Aorta (tissue), 5 donors: ENCODE measurements at regions of chr12 and their contacts with region 1.

Region 1: DNA sequence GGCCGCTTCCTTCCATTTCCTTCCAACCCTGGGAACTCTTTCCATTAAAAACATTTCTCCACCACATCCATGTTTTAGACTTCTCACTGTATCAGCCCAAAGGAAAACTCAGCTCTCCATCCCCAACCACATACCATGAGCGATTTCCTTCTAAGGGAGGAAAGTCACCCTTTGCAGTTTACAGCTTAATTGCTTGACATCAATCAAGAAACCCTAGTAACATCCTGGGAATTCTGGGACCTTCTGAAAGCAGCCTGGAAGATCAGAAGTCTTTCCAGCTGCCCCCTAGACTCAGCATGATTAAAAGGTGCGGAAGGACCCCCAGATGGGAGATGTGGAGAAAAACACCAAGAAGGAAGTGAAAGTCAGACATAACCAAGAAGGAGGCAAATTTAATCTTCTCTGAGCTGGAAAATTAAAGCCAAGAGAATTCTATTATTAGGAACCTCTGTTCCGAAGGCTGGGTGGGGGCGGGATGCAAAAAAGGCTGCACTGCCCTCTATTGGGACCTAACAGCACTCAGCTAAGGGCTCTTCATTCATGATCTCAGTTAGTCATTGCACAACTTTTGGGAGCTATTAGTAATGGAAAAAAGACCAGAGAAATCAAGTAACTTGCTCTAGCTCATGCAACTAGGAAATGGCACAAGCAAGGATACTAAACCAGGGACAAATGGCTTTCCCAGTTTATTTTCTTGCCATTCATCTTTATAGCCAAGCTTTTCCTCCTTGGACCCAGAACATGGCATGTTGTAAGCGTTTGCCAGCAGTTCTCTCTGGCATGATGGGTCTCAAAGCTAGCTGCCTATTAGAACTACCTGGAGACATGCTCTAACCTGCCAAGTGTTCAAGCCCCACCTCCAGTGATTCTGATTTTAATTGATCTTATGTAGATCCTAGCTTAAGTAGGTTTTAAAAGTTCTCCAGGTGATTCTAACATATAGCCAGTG is 73.1 kb upstream of the PLXNC1 start:
- DNase-seq: peak; percentile 80 to 83
- ATAC-seq: peak; percentile 94
- H3K4me3 ChIP-seq: peak overlapping the region in 1 of 2 donors; percentile 54
- H3K27ac ChIP-seq: peak overlapping the region; percentile 96 to 99
- H3K4me1 ChIP-seq: peaks cover 0 to 8% of the 10 kb centered on the region in 2 donors
- H3K27me3 ChIP-seq: no peaks in the 10 kb centered on the region

Region 2: GRCh38 chr12:93273834-93274564 is 801.3 kb before region 1 on chr12:
- intact Hi-C with region 1: no loop called
- DNase-seq: no peak
- ATAC-seq: no peak
- H3K4me3 ChIP-seq: no peak overlapping the region
- H3K27ac ChIP-seq: no peak overlapping the region
- H3K4me1 ChIP-seq: no peaks in the 10 kb centered on the region
- H3K27me3 ChIP-seq: no peaks in the 10 kb centered on the region

Region 3: DNA sequence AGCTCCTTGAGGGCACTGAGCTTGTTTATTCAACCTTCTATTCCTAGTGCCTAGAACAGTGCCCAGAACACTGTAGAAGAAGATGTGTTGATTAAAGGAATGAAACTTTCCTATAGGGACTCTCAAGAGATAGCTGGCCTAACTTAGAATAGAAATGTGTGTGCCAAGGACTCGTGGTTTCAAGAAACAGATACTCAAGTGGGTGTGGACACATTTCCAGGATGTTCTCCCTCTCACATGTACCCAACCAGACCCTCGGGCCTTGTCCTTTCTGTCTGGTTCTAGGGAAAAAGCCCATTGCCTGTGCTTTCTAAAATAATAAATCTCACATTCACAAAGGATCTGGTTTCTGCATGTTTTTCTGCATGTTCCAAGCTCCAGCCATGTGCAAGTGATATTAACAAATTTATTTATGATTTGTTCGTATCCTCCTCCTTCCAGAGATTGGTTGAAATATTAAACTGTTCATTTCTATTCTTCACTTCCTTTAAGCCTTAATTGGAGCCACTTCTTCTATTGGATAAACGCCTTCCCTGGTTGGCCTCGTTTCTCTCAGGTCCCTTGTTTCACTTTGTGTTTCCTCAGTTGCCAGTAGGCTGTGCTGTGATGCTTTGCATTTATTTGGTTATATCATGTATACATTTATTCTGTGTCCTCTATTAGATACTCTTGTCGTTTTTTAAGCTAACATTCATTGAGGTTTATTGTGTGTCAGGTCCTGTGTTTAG is 308.3 kb before region 1 on chr12:
- intact Hi-C with region 1: loop called in 1 of 2 experiments (anchors 10 kb)
- DNase-seq: no peak
- ATAC-seq: peak; percentile 88
- H3K4me3 ChIP-seq: no peak overlapping the region
- H3K27ac ChIP-seq: no peak overlapping the region
- H3K4me1 ChIP-seq: peaks cover 0 to 1% of the 10 kb centered on the region in 2 donors
- H3K27me3 ChIP-seq: no peaks in the 10 kb centered on the region

Region 4: GRCh38 chr12:93785262-93786010 is 289.8 kb before region 1 on chr12:
- intact Hi-C with region 1: loop called in 1 of 2 experiments (anchors 2 kb)
- DNase-seq: peak in 1 of 2 donors; percentile 68
- ATAC-seq: peak; percentile 90
- H3K4me3 ChIP-seq: no peak overlapping the region
- H3K27ac ChIP-seq: peak overlapping the region; percentile 50 to 84
- H3K4me1 ChIP-seq: peaks cover 0 to 9% of the 10 kb centered on the region in 2 donors
- H3K27me3 ChIP-seq: no peaks in the 10 kb centered on the region

Region 5: DNA sequence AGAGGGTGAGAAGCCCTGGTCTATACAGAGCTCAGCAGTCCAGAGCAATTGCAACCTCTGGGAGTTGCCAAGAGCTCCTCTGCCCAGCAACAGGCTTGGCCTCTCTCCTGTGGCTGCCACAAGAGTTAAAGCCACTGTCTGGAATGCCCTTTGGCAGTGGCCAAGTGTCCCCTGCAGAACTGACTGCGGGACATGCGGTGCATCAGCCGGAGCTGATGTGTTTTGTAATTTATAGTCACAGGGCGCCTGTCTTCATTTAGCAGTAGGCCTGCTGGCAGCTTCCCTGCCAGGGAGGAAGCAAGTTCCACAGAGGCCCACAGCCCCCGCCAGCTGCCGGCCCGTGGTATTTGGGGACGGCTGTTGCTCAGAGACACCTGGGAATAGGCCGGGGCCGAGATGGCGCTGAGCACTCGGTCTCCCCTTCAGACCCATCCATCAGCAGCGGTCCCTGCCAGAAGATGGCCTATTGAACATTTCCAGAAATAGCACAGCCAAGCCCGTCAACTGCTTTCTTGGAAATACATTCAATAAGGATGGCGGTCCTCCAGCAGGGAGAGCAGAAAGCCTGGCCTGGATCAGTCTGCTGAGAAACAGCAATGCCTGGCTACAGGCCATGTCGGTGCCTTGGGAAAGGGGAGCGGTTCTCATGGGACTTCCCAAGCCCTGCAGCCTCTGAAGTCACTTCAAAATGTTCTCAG is 180.7 kb before region 1 on chr12:
- intact Hi-C with region 1: loop called in 1 of 2 experiments (anchors 10 kb)
- DNase-seq: peak; percentile 91
- ATAC-seq: peak; percentile 90
- H3K4me3 ChIP-seq: no peak overlapping the region
- H3K27ac ChIP-seq: peak overlapping the region; percentile 38 to 95
- H3K4me1 ChIP-seq: no peaks in the 10 kb centered on the region
- H3K27me3 ChIP-seq: no peaks in the 10 kb centered on the region

Region 6: GRCh38 chr12:93918262-93918661 is 157.0 kb before region 1 on chr12:
- intact Hi-C with region 1: loop called in 1 of 2 experiments (anchors 5 kb)
- DNase-seq: peak in 1 of 2 donors; percentile 52
- ATAC-seq: peak; percentile 87
- H3K4me3 ChIP-seq: no peak overlapping the region
- H3K27ac ChIP-seq: peak overlapping the region; percentile 82 to 99
- H3K4me1 ChIP-seq: peaks cover 3% of the 10 kb centered on the region in 2 donors
- H3K27me3 ChIP-seq: no peaks in the 10 kb centered on the region

Region 7: DNA sequence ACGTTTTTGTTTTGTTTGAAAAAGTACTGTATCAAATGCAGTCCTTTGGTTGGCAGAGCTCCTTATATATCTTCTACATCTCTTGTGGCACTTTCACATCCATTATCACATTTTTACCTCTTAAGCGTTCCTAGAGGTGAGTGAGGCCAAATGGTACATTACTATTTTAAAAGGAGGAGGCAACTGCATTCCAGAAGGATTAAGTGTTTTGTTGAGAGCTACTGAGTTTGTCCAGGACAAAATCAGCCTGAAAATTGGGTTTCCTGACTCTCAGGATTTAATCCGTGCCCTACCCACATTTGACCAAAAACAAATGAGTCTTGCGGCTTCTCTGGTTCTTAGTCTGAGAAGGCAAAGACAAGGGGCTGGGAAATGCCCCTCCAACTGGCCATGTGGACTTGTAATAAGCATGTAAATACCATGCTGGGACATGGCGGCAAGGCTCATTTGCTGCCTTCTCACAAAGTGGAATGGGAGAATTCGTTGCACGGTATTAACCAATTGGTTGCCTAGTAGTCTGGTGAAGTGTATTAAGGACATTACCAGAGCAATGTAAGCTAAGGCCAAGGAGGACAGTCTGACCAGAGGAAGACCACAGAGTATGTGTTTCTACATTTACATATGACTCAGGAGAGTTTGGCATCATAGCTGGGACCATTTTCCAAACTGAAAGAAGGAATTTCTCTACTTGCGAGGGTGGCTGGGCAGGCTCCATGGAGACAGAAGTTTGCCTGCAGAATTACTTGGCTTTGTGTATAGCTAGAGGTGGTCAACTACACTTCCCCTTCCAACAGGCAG is 102.6 kb before region 1 on chr12:
- intact Hi-C with region 1: loop called in 1 of 2 experiments (anchors 5 kb)
- DNase-seq: peak in 1 of 2 donors; percentile 68
- ATAC-seq: peak; percentile 39
- H3K4me3 ChIP-seq: no peak overlapping the region
- H3K27ac ChIP-seq: peak overlapping the region; percentile 73 to 98
- H3K4me1 ChIP-seq: peaks cover 4 to 6% of the 10 kb centered on the region in 2 donors
- H3K27me3 ChIP-seq: no peaks in the 10 kb centered on the region